Dendritic cell treated with granulocyte-macrophage colony-stimulating factor and Interleukin-4, amounts not matched to agents 40 ng/mL and 50 ng/mL, for 4 days (primary cell): ENCODE measurements at regions of chr12 and their contacts with region 1.

Region 1: GRCh38 chr12:111396726-111397445 is 8.8 kb upstream of the SH2B3 start:
- H3K4me3 Mint-ChIP-seq: peak overlapping the region; percentile 77
- H3K27ac Mint-ChIP-seq: peak overlapping the region; percentile 92
- H3K4me1 Mint-ChIP-seq: peaks cover 61% of the 10 kb centered on the region
- H3K27me3 Mint-ChIP-seq: no peaks in the 10 kb centered on the region

Region 2: GRCh38 chr12:111367661-111368221 is 29.1 kb before region 1 on chr12:
- intact Hi-C with region 1: no loop called
- H3K4me3 Mint-ChIP-seq: peak overlapping the region; percentile 78
- H3K27ac Mint-ChIP-seq: peak overlapping the region; percentile 84
- H3K4me1 Mint-ChIP-seq: peaks cover 63% of the 10 kb centered on the region
- H3K27me3 Mint-ChIP-seq: no peaks in the 10 kb centered on the region

Region 3: GRCh38 chr12:111444925-111445725 is 48.2 kb after region 1 on chr12:
- intact Hi-C with region 1: loop called (anchors 2 kb)
- H3K4me3 Mint-ChIP-seq: peak overlapping the region; percentile 50
- H3K27ac Mint-ChIP-seq: peak overlapping the region; percentile 68
- H3K4me1 Mint-ChIP-seq: peaks cover 100% of the 10 kb centered on the region
- H3K27me3 Mint-ChIP-seq: no peaks in the 10 kb centered on the region

Region 4: DNA sequence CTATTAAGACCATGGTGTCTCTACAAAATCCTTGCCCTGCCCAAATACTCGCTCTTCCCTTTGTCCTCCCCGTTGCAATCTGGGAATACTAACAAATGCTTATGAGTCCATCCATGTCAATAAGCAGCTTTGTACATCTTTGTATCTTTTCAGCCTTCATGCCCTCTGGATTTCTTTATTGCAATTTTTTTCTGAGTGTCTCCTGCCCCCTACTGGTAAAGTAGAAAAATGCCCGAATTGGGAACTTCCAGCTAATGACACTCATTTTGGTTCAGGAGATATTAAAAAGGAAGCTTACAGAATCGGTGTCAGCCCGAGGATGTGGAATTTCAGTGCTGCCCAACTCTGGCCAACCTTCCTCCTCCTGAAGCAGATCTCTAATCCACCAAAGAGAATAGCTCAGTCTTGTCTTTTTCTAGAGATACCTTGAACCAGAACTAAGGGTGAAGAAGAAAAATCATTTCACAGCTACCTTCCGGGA is 54.8 kb after region 1 on chr12:
- intact Hi-C with region 1: loop called (anchors 1 kb)
- H3K4me3 Mint-ChIP-seq: no peak overlapping the region
- H3K27ac Mint-ChIP-seq: no peak overlapping the region
- H3K4me1 Mint-ChIP-seq: peaks cover 57% of the 10 kb centered on the region
- H3K27me3 Mint-ChIP-seq: no peaks in the 10 kb centered on the region